ENCODE measurements at regions of chr3 and their contacts with region 1.

Region 1: DNA sequence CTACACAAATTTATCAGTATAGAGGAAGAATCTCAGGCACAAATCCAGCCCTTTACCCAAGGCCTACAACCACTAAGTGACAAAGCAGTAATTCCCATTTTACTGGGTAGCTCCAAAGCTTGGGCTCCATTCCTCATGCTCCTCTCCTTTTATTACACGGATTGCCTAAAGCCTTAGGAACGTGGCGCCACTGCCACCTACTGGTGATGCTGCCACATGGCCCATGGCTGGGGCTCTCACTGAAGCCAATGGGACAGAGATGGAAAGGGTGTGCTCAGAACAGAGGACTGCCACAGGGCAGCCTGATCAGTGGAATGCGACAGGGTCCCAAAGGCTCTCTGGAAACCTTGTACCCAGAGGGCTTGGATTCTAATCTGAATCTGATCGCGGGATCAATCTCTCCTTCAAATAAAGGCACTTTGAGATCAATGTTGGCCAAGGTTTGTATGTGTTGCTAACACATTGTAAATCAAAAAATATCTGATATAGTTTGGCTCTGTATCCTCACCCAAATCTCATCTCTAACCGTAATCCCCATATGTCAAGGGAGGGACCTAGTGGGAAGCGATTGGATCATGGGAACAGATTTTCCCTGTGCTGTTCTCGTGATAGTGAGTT is 33.5 kb upstream of the LYZL4 start:
- DNase-seq: peak; percentile 5
- H3K4me3 ChIP-seq: no peak overlapping the region
- CTCF ChIP-seq: peak; percentile 98

Region 2: GRCh38 chr3:42247576-42248027 is 196.3 kb before region 1 on chr3:
- CTCF ChIA-PET with region 1: interaction called, 154 read pairs
- POLR2A ChIA-PET with region 1: no interaction called
- DNase-seq: no peak
- H3K4me3 ChIP-seq: no peak overlapping the region
- CTCF ChIP-seq: peak; percentile 66

Region 3: GRCh38 chr3:42256135-42256819 is 187.7 kb before region 1 on chr3:
- CTCF ChIA-PET with region 1: interaction called, 18 read pairs
- POLR2A ChIA-PET with region 1: no interaction called
- DNase-seq: no peak
- H3K4me3 ChIP-seq: no peak overlapping the region
- CTCF ChIP-seq: no peak

Region 4: DNA sequence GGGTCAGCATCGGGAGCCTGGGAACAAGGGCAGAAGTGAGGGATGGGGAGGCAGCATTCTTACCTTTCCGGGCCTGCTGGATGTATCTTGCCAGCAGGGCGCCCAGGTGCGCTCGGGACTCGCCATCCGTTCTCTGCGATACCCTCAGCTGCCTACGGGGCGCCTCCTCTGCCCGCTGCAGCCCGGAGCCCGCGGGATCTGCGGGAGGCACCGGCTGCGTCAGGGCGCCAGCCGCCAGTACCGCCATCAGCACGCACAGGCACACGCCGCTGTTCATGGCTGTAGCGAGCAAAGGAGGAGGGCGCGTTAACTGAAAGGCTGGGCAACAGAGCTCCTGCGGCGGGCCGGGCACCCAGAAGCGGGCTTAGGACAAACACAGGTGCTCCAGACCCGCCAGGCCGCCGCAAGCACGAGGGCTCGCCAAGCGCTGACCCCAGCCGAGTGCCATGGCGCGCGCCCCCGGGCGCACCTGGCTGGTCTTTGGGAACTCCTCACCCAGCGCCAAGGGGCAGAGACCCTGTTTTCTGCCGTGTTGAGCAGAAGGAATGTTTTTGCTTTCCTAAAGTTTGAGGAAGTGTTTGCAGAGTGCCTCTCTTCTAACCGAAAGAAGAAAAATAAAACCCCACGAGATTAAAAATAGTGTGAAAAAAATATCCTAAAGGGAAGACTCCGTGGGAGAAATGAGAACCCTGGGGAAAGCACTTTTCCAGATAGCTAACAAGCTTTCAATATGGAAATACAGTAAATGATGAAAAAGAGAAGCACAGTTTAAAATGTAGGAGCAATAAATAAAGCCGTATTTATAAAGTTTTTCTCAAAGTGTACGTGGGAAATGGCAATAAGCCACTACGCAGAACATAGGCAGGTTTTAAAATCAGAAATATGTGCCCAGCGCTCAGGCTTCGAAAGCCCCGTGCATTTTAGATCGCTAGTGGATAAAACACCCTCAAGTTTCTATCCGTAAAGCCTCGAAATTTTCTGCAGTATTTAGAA is 180.3 kb before region 1 on chr3:
- CTCF ChIA-PET with region 1: interaction called, 18 read pairs
- POLR2A ChIA-PET with region 1: no interaction called
- DNase-seq: no peak
- H3K4me3 ChIP-seq: peak overlapping the region; percentile 6; the same call in 1 of the 2 replicates
- CTCF ChIP-seq: no peak

Region 5: DNA sequence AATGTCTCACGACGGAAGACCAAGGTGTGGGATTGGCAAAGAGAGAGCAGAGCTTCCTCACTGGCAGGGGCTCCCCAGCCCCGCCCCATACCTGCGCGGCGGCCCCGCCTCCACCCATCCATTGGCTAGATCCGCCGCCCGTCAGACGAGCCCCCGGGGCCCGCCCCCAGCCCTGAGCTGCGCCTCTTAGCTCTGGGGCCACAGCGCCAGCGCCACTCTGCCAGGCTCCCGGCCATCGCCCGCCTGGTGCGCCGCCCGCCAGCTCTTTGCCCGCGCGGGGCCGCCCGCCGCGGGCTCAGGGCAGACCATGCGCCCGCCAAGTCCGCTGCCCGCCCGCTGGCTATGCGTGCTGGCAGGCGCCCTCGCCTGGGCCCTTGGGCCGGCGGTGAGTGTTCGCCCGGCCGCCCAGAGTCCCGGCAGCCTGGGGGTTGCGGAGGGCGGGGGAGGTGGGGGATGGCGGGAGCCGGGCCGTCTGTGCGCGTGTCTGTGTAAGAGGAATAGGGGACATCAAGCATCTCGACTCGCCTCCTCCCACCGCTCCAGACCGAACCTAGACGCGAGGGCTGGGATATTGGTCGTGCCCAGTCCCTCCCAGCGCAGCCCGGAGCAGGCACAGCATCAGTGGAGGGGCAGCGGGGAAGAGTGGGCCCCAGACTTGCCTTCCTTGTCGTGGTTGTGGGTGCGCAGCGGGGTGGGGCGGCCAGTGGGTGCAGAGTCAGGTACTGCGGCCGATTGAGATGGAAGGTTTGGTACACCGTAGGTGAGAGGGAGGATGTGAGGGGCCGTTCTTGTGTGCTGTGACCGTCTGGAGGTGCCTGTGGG is 58.7 kb after region 1 on chr3 and contains the start of gene VIPR1:
- CTCF ChIA-PET with region 1: no interaction called
- POLR2A ChIA-PET with region 1: no interaction called
- DNase-seq: no peak
- H3K4me3 ChIP-seq: peak within 1 kb of the TSS; percentile 6
- CTCF ChIP-seq: no peak

Region 6: DNA sequence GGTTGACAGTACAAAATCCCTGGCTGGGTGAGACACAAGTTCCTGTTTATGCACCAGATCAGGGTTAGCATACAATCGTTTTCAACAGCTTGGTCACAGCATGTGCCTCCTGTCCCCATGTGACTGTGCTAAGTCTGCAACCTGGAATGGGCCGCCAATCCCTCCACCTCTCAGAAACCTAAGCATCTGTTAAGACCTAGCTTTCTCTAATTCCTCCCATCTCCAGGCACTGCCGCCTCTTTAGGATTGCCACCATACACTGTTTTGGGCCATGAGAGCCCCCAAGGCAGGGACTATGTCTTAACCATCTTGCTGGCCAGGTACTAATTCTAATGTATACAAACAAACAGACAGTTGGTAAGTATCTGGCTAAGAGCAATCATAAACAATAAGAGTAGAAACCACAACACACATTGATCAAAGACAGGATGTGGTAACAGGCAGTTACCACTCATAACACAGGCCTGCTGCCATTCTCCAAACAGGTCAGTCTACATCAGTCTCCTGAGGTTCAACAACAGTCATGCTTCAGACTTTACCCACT is 112.2 kb after region 1 on chr3:
- CTCF ChIA-PET with region 1: no interaction called
- POLR2A ChIA-PET with region 1: no interaction called
- DNase-seq: no peak
- H3K4me3 ChIP-seq: no peak overlapping the region
- CTCF ChIP-seq: no peak

Measured in AG04449 (cell line).